ENCODE measurements at regions of chr19 and their contacts with region 1.

Region 1: GRCh38 chr19:19732579-19733501 is at the start of gene ZNF14:
- DNase-seq: peak; percentile 91
- ATAC-seq: peak; percentile 99
- H3K4me3 ChIP-seq: peak within 1 kb of the TSS; percentile 75 to 90 (median 80)
- H3K27ac ChIP-seq: peak within 1 kb of the TSS; percentile 72
- H3K4me1 ChIP-seq: peaks cover 10% of the 10 kb centered on the region
- H3K27me3 ChIP-seq: no peaks in the 10 kb centered on the region; a peak in 1 of 5 replicates
- CTCF ChIP-seq: peak; percentile 33
- EP300 ChIP-seq: no peak
- POLR2A ChIP-seq: peak; percentile 84 to 98
- RAD21 ChIP-seq: no peak
- total RNA-seq, gene ZNF14: 6.2 and 8.8 TPM in 2 replicates

Region 2: DNA sequence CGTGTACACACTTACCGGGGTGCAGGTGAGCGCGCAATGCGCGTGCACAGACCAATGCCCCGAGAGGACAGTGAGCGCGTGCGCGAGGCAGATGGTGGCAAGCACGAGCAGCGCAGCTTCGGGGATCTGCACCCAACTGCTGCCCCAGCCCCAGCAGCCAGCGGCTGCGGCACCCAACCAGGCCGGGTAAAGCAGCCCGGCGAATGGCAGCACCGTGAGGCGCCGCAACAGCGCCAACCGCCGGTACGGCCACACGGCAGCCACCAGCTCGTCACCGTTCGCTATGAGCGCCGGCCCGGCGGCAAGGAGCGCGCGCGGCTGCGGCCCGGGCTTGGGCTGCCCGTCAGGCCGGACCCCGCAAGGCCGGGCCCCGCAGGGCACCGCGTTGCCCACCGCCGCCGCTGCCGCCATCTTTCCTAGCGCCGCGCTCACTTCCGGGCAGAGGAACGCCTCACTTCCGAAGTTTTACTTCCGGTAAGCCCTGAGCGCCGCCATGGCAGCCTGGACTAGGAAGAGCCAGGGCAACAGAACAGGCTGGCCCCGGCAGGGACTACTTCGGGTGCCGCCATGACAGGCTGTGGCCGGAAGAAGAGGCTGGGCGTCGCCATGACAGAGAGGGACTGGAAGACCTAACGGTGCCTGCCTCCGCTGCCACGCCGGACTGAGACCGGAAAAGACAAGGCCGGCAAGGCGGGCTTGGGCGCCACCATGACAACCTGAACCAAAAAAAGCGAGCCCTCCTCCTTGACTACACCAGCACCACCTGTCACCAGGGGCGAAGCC is 69.4 kb before region 1 on chr19 and contains the start of gene ATP13A1:
- CTCF ChIA-PET with region 1: no interaction called
- POLR2A ChIA-PET with region 1: interaction called, 7 read pairs
- in situ Hi-C with region 1: no loop called
- intact Hi-C with region 1: loop called (anchors 2 kb)
- DNase-seq: peak; percentile 95
- ATAC-seq: peak; percentile 87
- H3K4me3 ChIP-seq: peak within 1 kb of the TSS; percentile 79 to 99 (median 95)
- H3K27ac ChIP-seq: peak within 1 kb of the TSS; percentile 97
- H3K4me1 ChIP-seq: peaks cover 56% of the 10 kb centered on the region
- H3K27me3 ChIP-seq: no peaks in the 10 kb centered on the region; a peak in 1 of 5 replicates
- CTCF ChIP-seq: 0 out of 2 replicates have a peak, but pooled peaks have one; percentile 13
- EP300 ChIP-seq: no peak; a peak in 1 of 4 replicates
- POLR2A ChIP-seq: peak; percentile 73 to 84
- RAD21 ChIP-seq: peak; percentile 55
- total RNA-seq, gene ATP13A1: 9.8 and 23.2 TPM in 2 replicates

Region 3: GRCh38 chr19:19719798-19720197 is 13.0 kb before region 1 on chr19:
- CTCF ChIA-PET with region 1: no interaction called
- POLR2A ChIA-PET with region 1: no interaction called
- in situ Hi-C with region 1: no loop called
- intact Hi-C with region 1: no loop called
- DNase-seq: no peak
- ATAC-seq: no peak
- H3K4me3 ChIP-seq: no peak overlapping the region
- H3K27ac ChIP-seq: no peak overlapping the region
- H3K4me1 ChIP-seq: no peaks in the 10 kb centered on the region
- H3K27me3 ChIP-seq: no peaks in the 10 kb centered on the region
- CTCF ChIP-seq: no peak
- EP300 ChIP-seq: no peak
- POLR2A ChIP-seq: no peak
- RAD21 ChIP-seq: no peak

Region 4: GRCh38 chr19:19835560-19836038 is 102.8 kb after region 1 on chr19:
- CTCF ChIA-PET with region 1: no interaction called
- POLR2A ChIA-PET with region 1: no interaction called
- in situ Hi-C with region 1: no loop called
- intact Hi-C with region 1: no loop called
- DNase-seq: no peak
- ATAC-seq: no peak
- H3K4me3 ChIP-seq: no peak overlapping the region
- H3K27ac ChIP-seq: no peak overlapping the region
- H3K4me1 ChIP-seq: no peaks in the 10 kb centered on the region
- H3K27me3 ChIP-seq: no peaks in the 10 kb centered on the region
- CTCF ChIP-seq: no peak
- EP300 ChIP-seq: no peak
- POLR2A ChIP-seq: no peak
- RAD21 ChIP-seq: no peak

Region 5: DNA sequence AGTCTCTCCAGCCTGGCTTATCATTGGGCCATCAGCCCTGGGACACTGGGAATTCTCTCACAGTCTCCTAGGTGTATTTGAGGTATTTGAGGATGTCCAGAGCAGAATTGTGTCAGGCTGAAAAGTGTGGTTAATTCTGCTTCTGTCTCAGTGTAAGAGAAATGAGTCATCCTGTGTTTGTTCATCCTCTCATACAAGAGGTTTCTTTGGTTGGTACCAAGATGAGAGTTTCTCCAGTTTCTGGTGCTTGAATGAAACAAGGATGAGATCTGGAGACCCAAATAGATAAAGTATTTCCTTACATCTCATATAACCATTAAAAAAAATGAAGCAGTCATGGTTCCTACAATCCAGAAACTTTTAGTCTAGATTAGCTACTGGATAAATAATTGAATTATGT is 140.5 kb after region 1 on chr19:
- CTCF ChIA-PET with region 1: no interaction called
- POLR2A ChIA-PET with region 1: no interaction called
- in situ Hi-C with region 1: no loop called
- intact Hi-C with region 1: no loop called
- DNase-seq: no peak
- ATAC-seq: no peak
- H3K4me3 ChIP-seq: no peak overlapping the region
- H3K27ac ChIP-seq: no peak overlapping the region
- H3K4me1 ChIP-seq: peaks cover 8% of the 10 kb centered on the region
- H3K27me3 ChIP-seq: no peaks in the 10 kb centered on the region
- CTCF ChIP-seq: no peak
- EP300 ChIP-seq: no peak
- POLR2A ChIP-seq: no peak
- RAD21 ChIP-seq: no peak

Measured in HepG2 (cell line).